ENCODE measurements at regions of chr1 and their contacts with region 1.

Region 1: DNA sequence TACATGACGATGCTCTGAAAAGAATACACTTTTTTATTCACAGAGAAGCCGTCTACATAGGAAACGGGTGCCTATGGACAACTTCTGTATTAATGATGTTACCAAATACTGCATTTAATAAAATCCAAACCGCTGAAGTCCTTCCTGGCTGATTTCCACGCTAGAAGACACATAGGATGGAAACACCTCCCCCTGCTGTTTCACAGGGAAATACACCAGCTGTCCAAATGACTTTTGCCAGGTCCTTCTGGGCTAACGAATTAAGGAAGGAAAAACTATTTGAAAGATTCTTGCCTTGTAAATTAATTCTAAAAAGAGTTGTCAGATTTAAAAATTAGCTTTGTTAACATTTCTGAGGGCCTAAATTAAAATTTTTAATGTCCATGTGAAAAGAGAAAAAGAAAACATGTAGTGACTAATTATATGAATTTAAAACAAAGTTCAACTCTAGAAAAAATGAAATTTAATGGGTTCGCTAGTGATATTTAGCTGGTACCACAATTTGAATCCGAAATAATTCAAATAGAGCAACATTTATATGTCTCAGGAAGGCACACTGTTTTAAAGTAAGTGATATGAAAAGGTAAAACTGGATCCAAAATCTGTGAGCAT is 146.0 kb downstream of the RERE start:
- DNase-seq: peak in 1 of 2 donors; percentile 33
- H3K4me3 ChIP-seq: no peak overlapping the region
- H3K27ac ChIP-seq: no peak overlapping the region
- H3K4me1 ChIP-seq: peaks cover 0 to 36% (median 14%) of the 10 kb centered on the region in 4 donors
- H3K27me3 ChIP-seq: no peaks in the 10 kb centered on the region
- CTCF ChIP-seq: peak; percentile 76 to 78

Region 2: GRCh38 chr1:8211589-8212442 is 459.6 kb before region 1 on chr1:
- intact Hi-C with region 1: no loop called
- DNase-seq: peak; percentile 70 to 89
- H3K4me3 ChIP-seq: no peak overlapping the region
- H3K27ac ChIP-seq: peak overlapping the region; percentile 71 to 82
- H3K4me1 ChIP-seq: peaks cover 0 to 33% (median 11%) of the 10 kb centered on the region in 4 donors
- H3K27me3 ChIP-seq: no peaks in the 10 kb centered on the region
- CTCF ChIP-seq: no peak

Region 3: GRCh38 chr1:8560611-8561544 is 110.5 kb before region 1 on chr1:
- intact Hi-C with region 1: loop called (anchors 5 kb)
- DNase-seq: no peak
- H3K4me3 ChIP-seq: no peak overlapping the region
- H3K27ac ChIP-seq: no peak overlapping the region
- H3K4me1 ChIP-seq: peaks cover 0 to 16% (median 0%) of the 10 kb centered on the region in 4 donors
- H3K27me3 ChIP-seq: no peaks in the 10 kb centered on the region
- CTCF ChIP-seq: peak; percentile 93 to 94

Region 4: DNA sequence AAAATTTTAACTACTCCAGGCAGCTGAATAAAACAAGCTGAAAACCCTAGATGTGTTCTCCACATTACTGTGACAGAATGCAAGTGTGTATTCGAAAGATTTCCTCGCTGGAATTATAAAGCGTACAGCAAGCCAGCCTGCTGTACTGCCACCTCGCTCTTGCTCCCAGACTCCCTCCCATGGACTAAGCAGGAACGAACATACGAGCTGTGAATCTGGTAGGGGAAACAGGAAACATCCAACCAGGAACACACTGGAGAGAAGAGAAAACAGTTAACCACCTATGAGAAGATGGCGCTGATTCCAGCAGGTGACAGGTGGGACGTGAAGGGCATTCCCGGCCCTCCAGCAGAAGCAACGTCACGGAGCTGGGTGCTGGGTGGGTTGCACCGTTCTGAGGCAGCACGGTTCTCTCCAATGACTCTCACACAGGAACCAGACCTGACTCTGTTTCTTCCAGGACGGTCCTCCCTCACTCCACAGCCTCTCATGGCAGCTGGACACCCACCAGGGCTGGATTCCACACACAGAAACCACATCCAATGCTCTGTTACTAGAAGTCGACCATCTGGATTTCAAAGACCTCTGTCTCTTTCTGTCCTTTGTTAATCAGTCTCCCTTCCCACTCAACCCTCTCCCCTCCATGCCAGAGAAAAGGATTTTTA is 73.2 kb before region 1 on chr1:
- intact Hi-C with region 1: loop called (anchors 10 kb)
- DNase-seq: peak in 1 of 2 donors; percentile 36
- H3K4me3 ChIP-seq: peak overlapping the region; percentile 18 to 20
- H3K27ac ChIP-seq: peak overlapping the region; percentile 55 to 63
- H3K4me1 ChIP-seq: peaks cover 0 to 38% (median 14%) of the 10 kb centered on the region in 4 donors
- H3K27me3 ChIP-seq: no peaks in the 10 kb centered on the region
- CTCF ChIP-seq: peak; percentile 42 to 55

Measured in tibial artery (tissue), 4 donors.